ENCODE measurements at regions of chr17 and their contacts with region 1.

Region 1: DNA sequence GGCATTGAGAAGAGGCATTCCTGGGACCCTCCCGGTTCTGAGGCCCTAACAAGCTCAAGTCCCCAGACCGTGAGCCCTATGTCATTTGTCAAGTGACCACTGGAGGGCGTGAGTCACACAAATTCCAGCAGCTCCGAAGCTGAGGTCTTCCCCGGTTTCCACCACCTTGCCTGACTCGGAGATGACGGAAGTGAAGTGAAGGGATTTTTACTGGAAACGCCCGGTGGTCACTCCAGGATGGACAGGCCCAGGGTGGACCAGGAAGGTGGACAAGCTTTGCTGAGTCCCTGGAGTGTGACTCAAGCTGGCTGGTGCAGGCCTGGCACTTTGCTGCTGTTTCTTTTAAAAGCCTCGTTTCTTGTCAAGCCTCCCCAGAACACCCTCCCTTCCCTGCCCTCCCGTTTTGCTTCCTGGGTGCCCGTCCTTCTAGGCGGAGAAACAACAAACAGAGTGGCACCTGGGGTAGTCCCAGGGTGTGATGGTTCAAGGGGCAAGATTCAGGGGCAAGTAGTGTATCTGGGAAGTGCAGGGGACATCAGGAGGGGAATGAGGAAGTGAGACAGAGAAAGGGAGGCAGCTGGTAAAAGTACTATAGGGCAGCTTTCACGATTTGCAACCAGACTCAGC is 5.3 kb upstream of the NOS2 start:
- DNase-seq: peak; percentile 70
- ATAC-seq: peak; percentile 76
- H3K4me3 ChIP-seq: peak overlapping the region; percentile 20; the same call in 1 of the 2 replicates
- H3K27ac ChIP-seq: peak overlapping the region; percentile 98
- H3K4me1 ChIP-seq: peaks cover 48% of the 10 kb centered on the region
- H3K27me3 ChIP-seq: no peaks in the 10 kb centered on the region
- CTCF ChIP-seq: peak; percentile 83 to 91 (median 91)
- EP300 ChIP-seq: peak in 1 of 2 experiments; percentile 64; a peak in 1 of 4 replicates
- POLR2A ChIP-seq: 0 out of 2 replicates have a peak, but pooled peaks have one; percentile 37
- RAD21 ChIP-seq: peak; percentile 93

Region 2: GRCh38 chr17:27578718-27579085 is 226.9 kb before region 1 on chr17:
- CTCF ChIA-PET with region 1: no interaction called
- POLR2A ChIA-PET with region 1: no interaction called
- RAD21 ChIA-PET with region 1: no interaction called
- SMC1A ChIA-PET with region 1: no interaction called
- in situ Hi-C with region 1: no loop called
- intact Hi-C with region 1: no loop called
- DNase-seq: peak; percentile 57
- ATAC-seq: peak; percentile 94
- H3K4me3 ChIP-seq: no peak overlapping the region
- H3K27ac ChIP-seq: peak overlapping the region; percentile 67
- H3K4me1 ChIP-seq: peaks cover 30% of the 10 kb centered on the region
- H3K27me3 ChIP-seq: no peaks in the 10 kb centered on the region
- CTCF ChIP-seq: peak in 2 of 3 experiments; percentile 13 to 23; a peak in 2 of 6 replicates
- EP300 ChIP-seq: peak; percentile 53 to 82; a peak in 3 of 4 replicates
- POLR2A ChIP-seq: no peak
- RAD21 ChIP-seq: 0 out of 2 replicates have a peak, but pooled peaks have one; percentile 7

Region 3: DNA sequence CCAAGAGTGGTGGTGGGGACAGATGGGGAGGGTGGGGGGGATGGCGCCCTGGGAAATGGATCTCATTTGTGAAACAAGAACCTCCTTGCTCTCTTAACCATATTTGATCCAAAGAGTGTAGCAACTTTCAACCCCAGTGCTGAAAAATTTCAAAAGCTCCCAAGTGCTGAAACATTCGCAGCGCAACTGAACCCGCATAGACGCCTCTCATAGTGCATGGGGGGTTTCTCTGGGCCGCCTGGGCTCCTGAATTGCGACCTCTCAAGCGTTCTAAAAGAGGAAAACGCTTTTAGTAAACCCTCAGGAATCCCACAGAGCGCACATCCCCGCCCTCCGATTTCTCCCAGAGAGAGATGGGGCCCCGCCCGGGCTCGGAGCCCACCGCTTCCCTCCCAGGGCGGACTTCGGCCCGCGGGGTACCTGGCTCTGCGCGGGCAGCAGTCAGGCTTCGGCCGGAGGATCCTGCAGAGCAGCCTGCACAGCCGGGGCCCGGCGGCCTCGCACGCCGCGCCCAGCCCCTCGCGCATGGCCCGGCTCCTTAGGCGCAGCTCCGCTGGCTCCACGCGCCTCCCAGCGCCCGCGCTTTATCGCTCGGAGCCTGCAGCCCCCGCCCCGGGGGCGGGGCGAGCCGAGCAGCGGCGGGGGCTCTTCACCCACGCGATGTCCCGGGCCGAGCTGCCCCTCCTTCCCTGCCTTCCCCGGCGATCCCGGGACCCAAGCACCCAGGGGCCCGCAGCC is 12.3 kb before region 1 on chr17:
- CTCF ChIA-PET with region 1: interaction called, 17 read pairs
- POLR2A ChIA-PET with region 1: no interaction called
- RAD21 ChIA-PET with region 1: interaction called, 4 read pairs
- SMC1A ChIA-PET with region 1: interaction called, 8 read pairs
- in situ Hi-C with region 1: no loop called
- intact Hi-C with region 1: no loop called
- DNase-seq: no peak
- ATAC-seq: no peak
- H3K4me3 ChIP-seq: no peak overlapping the region
- H3K27ac ChIP-seq: no peak overlapping the region
- H3K4me1 ChIP-seq: no peaks in the 10 kb centered on the region
- H3K27me3 ChIP-seq: peaks cover 0 to 4% of the 10 kb centered on the region in 2 experiments; a peak in 1 of 4 replicates
- CTCF ChIP-seq: no peak
- EP300 ChIP-seq: no peak
- POLR2A ChIP-seq: no peak
- RAD21 ChIP-seq: no peak

Region 4: DNA sequence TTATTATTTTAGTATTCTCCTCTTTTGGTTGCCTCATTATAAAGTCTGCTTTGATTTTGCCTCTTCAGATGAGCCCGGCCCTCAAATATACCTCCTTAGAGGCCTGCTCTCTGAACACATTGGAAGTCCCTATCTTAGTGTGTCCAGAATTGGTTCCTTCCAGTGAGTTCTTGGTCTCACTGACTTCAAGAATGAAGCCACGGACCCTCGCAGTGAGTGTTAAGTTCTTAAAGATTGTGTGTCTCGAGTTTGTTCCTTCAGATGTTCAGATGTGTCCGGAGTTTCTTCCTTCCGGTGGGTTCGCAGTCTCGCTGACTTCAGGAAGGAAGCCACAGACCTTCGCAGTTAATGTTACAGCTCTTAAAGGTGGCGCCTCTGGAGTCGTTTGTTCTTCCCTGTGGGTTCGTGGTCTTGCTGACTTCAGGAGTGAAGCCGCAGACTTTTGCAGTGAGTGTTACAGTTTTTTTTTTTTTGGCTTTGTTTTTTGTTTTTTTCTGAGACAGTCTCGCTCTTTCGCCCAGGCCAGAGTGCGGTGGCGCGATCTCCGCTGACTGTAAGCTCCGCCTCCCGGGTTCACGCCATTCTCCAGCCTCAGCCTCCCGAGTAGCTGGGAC is 40.5 kb after region 1 on chr17:
- CTCF ChIA-PET with region 1: interaction called, 9 read pairs
- POLR2A ChIA-PET with region 1: interaction called, 5 read pairs
- RAD21 ChIA-PET with region 1: interaction called, 3 read pairs
- SMC1A ChIA-PET with region 1: interaction called, 11 read pairs
- in situ Hi-C with region 1: no loop called
- intact Hi-C with region 1: no loop called
- DNase-seq: no peak
- ATAC-seq: no peak
- H3K4me3 ChIP-seq: no peak overlapping the region
- H3K27ac ChIP-seq: no peak overlapping the region
- H3K4me1 ChIP-seq: peaks cover 3% of the 10 kb centered on the region; the same call in 1 of the 2 replicates
- H3K27me3 ChIP-seq: no peaks in the 10 kb centered on the region
- CTCF ChIP-seq: no peak
- EP300 ChIP-seq: no peak
- POLR2A ChIP-seq: no peak
- RAD21 ChIP-seq: no peak

Region 5: GRCh38 chr17:27873760-27874159 is 68.1 kb after region 1 on chr17:
- CTCF ChIA-PET with region 1: interaction called, 664 read pairs
- POLR2A ChIA-PET with region 1: interaction called, 40 read pairs
- RAD21 ChIA-PET with region 1: interaction called, 439 read pairs
- SMC1A ChIA-PET with region 1: interaction called, 457 read pairs
- in situ Hi-C with region 1: no loop called
- intact Hi-C with region 1: no loop called
- DNase-seq: no peak
- ATAC-seq: no peak
- H3K4me3 ChIP-seq: no peak overlapping the region
- H3K27ac ChIP-seq: no peak overlapping the region
- H3K4me1 ChIP-seq: no peaks in the 10 kb centered on the region
- H3K27me3 ChIP-seq: no peaks in the 10 kb centered on the region
- CTCF ChIP-seq: no peak
- EP300 ChIP-seq: no peak
- POLR2A ChIP-seq: no peak
- RAD21 ChIP-seq: no peak

Region 6: GRCh38 chr17:27892866-27893769 is 87.5 kb after region 1 on chr17 and contains the start of gene LYRM9:
- CTCF ChIA-PET with region 1: interaction called, 151 read pairs
- POLR2A ChIA-PET with region 1: interaction called, 22 read pairs
- RAD21 ChIA-PET with region 1: interaction called, 158 read pairs
- SMC1A ChIA-PET with region 1: interaction called, 457 read pairs
- in situ Hi-C with region 1: no loop called
- intact Hi-C with region 1: no loop called
- DNase-seq: peak; percentile 48
- ATAC-seq: peak; percentile 99
- H3K4me3 ChIP-seq: peak within 1 kb of the TSS; percentile 65
- H3K27ac ChIP-seq: peak within 1 kb of the TSS; percentile 61
- H3K4me1 ChIP-seq: peaks cover 8% of the 10 kb centered on the region
- H3K27me3 ChIP-seq: no peaks in the 10 kb centered on the region
- CTCF ChIP-seq: peak; percentile 77 to 91 (median 79)
- EP300 ChIP-seq: no peak
- POLR2A ChIP-seq: peak; percentile 72
- RAD21 ChIP-seq: peak; percentile 40
- polyA plus RNA-seq, gene LYRM9: 1.8 to 2.7 TPM

Region 7: GRCh38 chr17:27952366-27952765 is 146.7 kb after region 1 on chr17:
- CTCF ChIA-PET with region 1: no interaction called
- POLR2A ChIA-PET with region 1: no interaction called
- RAD21 ChIA-PET with region 1: no interaction called
- SMC1A ChIA-PET with region 1: no interaction called
- in situ Hi-C with region 1: no loop called
- intact Hi-C with region 1: no loop called
- DNase-seq: no peak
- ATAC-seq: no peak
- H3K4me3 ChIP-seq: no peak overlapping the region
- H3K27ac ChIP-seq: no peak overlapping the region
- H3K4me1 ChIP-seq: no peaks in the 10 kb centered on the region
- H3K27me3 ChIP-seq: no peaks in the 10 kb centered on the region
- CTCF ChIP-seq: no peak
- EP300 ChIP-seq: no peak
- POLR2A ChIP-seq: no peak
- RAD21 ChIP-seq: no peak

Region 8: GRCh38 chr17:28041068-28041843 is 235.6 kb after region 1 on chr17:
- CTCF ChIA-PET with region 1: interaction called, 5 read pairs
- POLR2A ChIA-PET with region 1: no interaction called
- RAD21 ChIA-PET with region 1: interaction called, 5 read pairs
- SMC1A ChIA-PET with region 1: interaction called, 4 read pairs
- in situ Hi-C with region 1: no loop called
- intact Hi-C with region 1: loop called (anchors 5 kb)
- DNase-seq: peak; percentile 97
- ATAC-seq: peak; percentile 96
- H3K4me3 ChIP-seq: peak overlapping the region; percentile 53
- H3K27ac ChIP-seq: no peak overlapping the region; the same call in 1 of the 2 replicates
- H3K4me1 ChIP-seq: peaks cover 10% of the 10 kb centered on the region
- H3K27me3 ChIP-seq: no peaks in the 10 kb centered on the region
- CTCF ChIP-seq: no peak
- EP300 ChIP-seq: peak in 1 of 2 experiments; percentile 7; a peak in 1 of 4 replicates
- POLR2A ChIP-seq: peak; percentile 94
- RAD21 ChIP-seq: no peak